GM12878 (cell line): ENCODE measurements at regions of chr17 and their contacts with region 1.

Region 1: GRCh38 chr17:29347831-29348629 is 42.1 kb upstream of the TAOK1 start:
- DNase-seq: no peak
- ATAC-seq: no peak
- H3K4me3 ChIP-seq: no peak overlapping the region
- H3K27ac ChIP-seq: no peak overlapping the region
- H3K4me1 ChIP-seq: no peaks in the 10 kb centered on the region
- H3K27me3 ChIP-seq: no peaks in the 10 kb centered on the region
- CTCF ChIP-seq: no peak
- EP300 ChIP-seq: no peak
- POLR2A ChIP-seq: no peak
- RAD21 ChIP-seq: no peak

Region 2: GRCh38 chr17:30062372-30062771 is 714.3 kb after region 1 on chr17:
- CTCF ChIA-PET with region 1: no interaction called
- POLR2A ChIA-PET with region 1: no interaction called
- RAD21 ChIA-PET with region 1: no interaction called
- SMC1A ChIA-PET with region 1: no interaction called
- in situ Hi-C with region 1: loop called (anchors 10 kb)
- intact Hi-C with region 1: no loop called
- DNase-seq: no peak
- ATAC-seq: no peak
- H3K4me3 ChIP-seq: no peak overlapping the region
- H3K27ac ChIP-seq: no peak overlapping the region
- H3K4me1 ChIP-seq: no peaks in the 10 kb centered on the region
- H3K27me3 ChIP-seq: no peaks in the 10 kb centered on the region; a peak in 1 of 4 replicates
- CTCF ChIP-seq: no peak
- EP300 ChIP-seq: no peak
- POLR2A ChIP-seq: no peak
- RAD21 ChIP-seq: no peak